Caco-2 (cell line): ENCODE measurements at regions of chr4 and their contacts with region 1.

Region 1: DNA sequence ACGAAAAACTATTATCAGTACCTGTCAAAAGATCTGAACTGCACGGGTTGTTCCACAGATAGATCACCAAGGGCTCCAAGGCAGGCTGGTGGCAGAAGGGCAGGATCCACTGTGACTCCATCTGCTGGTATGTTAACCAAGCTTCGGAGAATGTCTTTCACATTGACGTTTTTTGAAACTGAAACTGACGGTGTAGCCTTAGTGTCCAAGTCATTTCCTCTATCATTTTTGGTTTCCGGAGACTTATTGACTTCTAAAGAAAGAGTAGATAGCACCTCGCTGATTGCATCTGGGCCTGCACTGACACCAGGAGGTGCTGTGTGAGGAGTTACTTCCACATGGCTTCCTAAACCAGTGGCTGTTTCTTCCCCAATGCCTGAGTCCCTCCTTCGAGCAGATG is 186.9 kb downstream of the LRBA start:
- DNase-seq: no peak
- H3K4me3 ChIP-seq: no peak overlapping the region
- H3K4me3 Mint-ChIP-seq: no peak overlapping the region
- H3K27ac Mint-ChIP-seq: no peak overlapping the region
- H3K4me1 ChIP-seq: peaks cover 17% of the 10 kb centered on the region
- H3K4me1 Mint-ChIP-seq: peaks cover 22% of the 10 kb centered on the region
- H3K27me3 ChIP-seq: no peaks in the 10 kb centered on the region
- H3K27me3 Mint-ChIP-seq: no peaks in the 10 kb centered on the region
- CTCF ChIP-seq: no peak

Region 2: GRCh38 chr4:150789864-150790263 is 38.3 kb before region 1 on chr4:
- CTCF ChIA-PET with region 1: no interaction called
- POLR2A ChIA-PET with region 1: interaction called, 11 read pairs
- intact Hi-C with region 1: no loop called
- DNase-seq: no peak
- H3K4me3 ChIP-seq: no peak overlapping the region
- H3K4me3 Mint-ChIP-seq: no peak overlapping the region
- H3K27ac Mint-ChIP-seq: no peak overlapping the region
- H3K4me1 ChIP-seq: no peaks in the 10 kb centered on the region
- H3K4me1 Mint-ChIP-seq: peaks cover under 1% of the 10 kb centered on the region
- H3K27me3 ChIP-seq: no peaks in the 10 kb centered on the region
- H3K27me3 Mint-ChIP-seq: no peaks in the 10 kb centered on the region
- CTCF ChIP-seq: no peak